GM23248 (cell line): ENCODE measurements at regions of chr13 and their contacts with region 1.

Region 1: GRCh38 chr13:111539791-111540446 is 219.5 kb downstream of the TEX29 start:
- DNase-seq: no peak
- H3K4me3 ChIP-seq: no peak overlapping the region
- H3K27ac ChIP-seq: no peak overlapping the region
- H3K4me1 ChIP-seq: no peaks in the 10 kb centered on the region
- H3K27me3 ChIP-seq: peaks cover 8% of the 10 kb centered on the region; the same call in 1 of the 2 replicates

Region 2: DNA sequence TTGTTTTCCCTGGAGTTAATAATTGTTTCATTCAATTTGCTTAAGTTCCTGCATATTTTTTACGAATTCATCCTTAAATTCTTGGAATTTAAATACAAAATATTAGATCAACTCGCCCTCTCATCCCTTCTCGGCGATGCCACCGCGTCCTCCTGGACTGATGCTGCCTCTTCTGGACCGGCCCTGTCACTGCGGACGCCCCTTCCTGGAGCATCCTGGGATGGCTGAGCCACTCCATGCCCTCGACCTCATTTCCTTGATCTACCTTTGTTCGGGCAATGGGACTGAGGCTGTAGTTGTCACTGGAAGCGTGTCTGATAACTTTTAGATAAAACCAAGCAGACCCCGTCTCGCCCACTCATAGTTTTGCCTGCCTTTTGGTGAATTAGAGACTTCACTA is 64.2 kb after region 1 on chr13:
- in situ Hi-C with region 1: loop called (anchors 10 kb)
- DNase-seq: no peak
- H3K4me3 ChIP-seq: no peak overlapping the region
- H3K27ac ChIP-seq: no peak overlapping the region
- H3K4me1 ChIP-seq: no peaks in the 10 kb centered on the region
- H3K27me3 ChIP-seq: no peaks in the 10 kb centered on the region